Activated CD4-positive, alpha-beta T cell treated with anti-CD3 and anti-CD28 coated beads, Interleukin-2, amount 10 ng/mL, durations not matched to agents 7 days and 5 days (primary cell): ENCODE measurements at regions of chr4 and their contacts with region 1.

Region 1: DNA sequence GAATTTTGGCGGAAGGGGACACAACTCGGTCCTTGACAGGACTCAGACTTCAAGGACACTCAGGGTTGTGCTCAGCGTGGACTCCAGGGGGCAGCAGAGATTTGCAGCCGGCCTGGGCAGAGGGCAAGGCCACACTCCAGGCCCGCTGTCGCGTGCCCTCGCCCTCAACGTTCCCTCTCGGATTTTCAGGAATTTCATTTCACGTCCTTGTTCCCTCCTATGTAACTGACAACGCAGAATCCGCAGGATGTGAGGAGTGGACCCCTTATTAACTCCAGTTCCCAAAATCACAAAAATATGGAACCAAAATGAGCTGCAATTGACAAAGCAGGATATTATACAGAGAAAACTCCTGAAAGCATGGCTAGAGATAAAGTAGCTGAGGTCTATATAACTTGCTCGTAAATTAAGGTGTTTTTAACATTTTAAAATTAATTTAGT is 21.0 kb upstream of the DCTD start:
- DNase-seq: peak; percentile 62
- H3K4me3 Mint-ChIP-seq: no peak overlapping the region
- H3K27ac Mint-ChIP-seq: no peak overlapping the region
- H3K4me1 Mint-ChIP-seq: peaks cover 2% of the 10 kb centered on the region
- H3K27me3 Mint-ChIP-seq: peaks cover 14% of the 10 kb centered on the region

Region 2: GRCh38 chr4:182925298-182925738 is 12.9 kb before region 1 on chr4:
- CTCF ChIA-PET with region 1: interaction called, 26 read pairs
- POLR2A ChIA-PET with region 1: no interaction called
- DNase-seq: peak; percentile 63
- H3K4me3 Mint-ChIP-seq: no peak overlapping the region
- H3K27ac Mint-ChIP-seq: no peak overlapping the region
- H3K4me1 Mint-ChIP-seq: no peaks in the 10 kb centered on the region
- H3K27me3 Mint-ChIP-seq: peaks cover 10% of the 10 kb centered on the region